K562 (cell line): ENCODE measurements at regions of chr2 and their contacts with region 1.

Region 1: GRCh38 chr2:126657636-126658318 is 1.8 kb downstream of the GYPC start:
- DNase-seq: peak; percentile 62 to 92 (median 76)
- ATAC-seq: peak; percentile 73
- H3K4me3 ChIP-seq: peak overlapping the region; percentile 82
- H3K27ac ChIP-seq: peak overlapping the region; percentile 92
- H3K4me1 ChIP-seq: peaks cover 61 to 64% of the 10 kb centered on the region in 2 experiments
- H3K27me3 ChIP-seq: no peaks in the 10 kb centered on the region
- CTCF ChIP-seq: no peak
- EP300 ChIP-seq: peak; percentile 66; the same call in 1 of the 2 replicates
- POLR2A ChIP-seq: peak; percentile 40; the same call in 1 of the 2 replicates
- RAD21 ChIP-seq: no peak; a peak in 1 of 4 replicates

Region 2: GRCh38 chr2:126307740-126308139 is 350.0 kb before region 1 on chr2:
- CTCF ChIA-PET with region 1: no interaction called
- POLR2A ChIA-PET with region 1: no interaction called
- in situ Hi-C with region 1: no loop called
- intact Hi-C with region 1: loop called (anchors 2 kb)
- DNase-seq: no peak
- ATAC-seq: peak; percentile 55
- H3K4me3 ChIP-seq: peak overlapping the region; percentile 61
- H3K27ac ChIP-seq: peak overlapping the region; percentile 94
- H3K4me1 ChIP-seq: peaks cover 4 to 17% of the 10 kb centered on the region in 2 experiments; a peak in 2 of 5 replicates
- H3K27me3 ChIP-seq: no peaks in the 10 kb centered on the region
- CTCF ChIP-seq: no peak
- EP300 ChIP-seq: no peak
- POLR2A ChIP-seq: no peak
- RAD21 ChIP-seq: no peak

Region 3: DNA sequence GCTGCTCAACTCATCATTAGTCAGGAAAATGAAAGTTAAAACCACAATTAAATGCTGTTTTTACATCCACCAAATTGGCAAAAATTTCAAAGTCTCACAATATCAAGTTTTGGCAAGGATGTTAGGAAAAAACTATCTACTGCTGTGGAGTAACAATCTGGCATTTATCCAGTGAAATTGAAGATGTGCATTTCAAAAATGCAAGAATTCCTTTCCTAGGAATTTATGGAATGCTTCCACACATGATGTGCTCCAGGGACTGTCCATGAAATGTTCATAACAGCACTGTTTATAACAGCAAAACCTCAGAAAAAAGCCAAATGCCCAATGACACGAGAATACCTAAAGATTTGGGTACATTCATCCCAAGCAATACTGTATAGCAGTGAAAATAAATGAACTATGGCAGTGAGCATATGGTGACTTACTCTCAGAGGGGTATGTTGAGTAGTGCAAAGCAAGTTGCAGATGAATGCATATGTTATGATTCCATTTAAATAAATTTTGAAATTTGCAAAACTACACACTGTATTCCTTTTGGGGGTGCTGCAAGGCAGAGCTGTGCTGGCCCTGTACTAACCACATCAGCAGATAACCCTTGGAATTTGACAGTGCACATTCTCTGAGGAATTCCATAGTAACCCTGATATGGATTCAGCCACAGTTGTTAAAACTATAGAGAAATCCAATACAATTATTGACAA is 43.1 kb before region 1 on chr2:
- CTCF ChIA-PET with region 1: no interaction called
- POLR2A ChIA-PET with region 1: no interaction called
- in situ Hi-C with region 1: no loop called
- intact Hi-C with region 1: loop called (anchors 1 kb)
- DNase-seq: no peak
- ATAC-seq: peak; percentile 77
- H3K4me3 ChIP-seq: no peak overlapping the region
- H3K27ac ChIP-seq: no peak overlapping the region
- H3K4me1 ChIP-seq: no peaks in the 10 kb centered on the region
- H3K27me3 ChIP-seq: no peaks in the 10 kb centered on the region
- CTCF ChIP-seq: peak; percentile 23 to 59 (median 31); a peak in 4 of 6 replicates
- EP300 ChIP-seq: no peak
- POLR2A ChIP-seq: no peak
- RAD21 ChIP-seq: peak; percentile 52 to 61

Region 4: DNA sequence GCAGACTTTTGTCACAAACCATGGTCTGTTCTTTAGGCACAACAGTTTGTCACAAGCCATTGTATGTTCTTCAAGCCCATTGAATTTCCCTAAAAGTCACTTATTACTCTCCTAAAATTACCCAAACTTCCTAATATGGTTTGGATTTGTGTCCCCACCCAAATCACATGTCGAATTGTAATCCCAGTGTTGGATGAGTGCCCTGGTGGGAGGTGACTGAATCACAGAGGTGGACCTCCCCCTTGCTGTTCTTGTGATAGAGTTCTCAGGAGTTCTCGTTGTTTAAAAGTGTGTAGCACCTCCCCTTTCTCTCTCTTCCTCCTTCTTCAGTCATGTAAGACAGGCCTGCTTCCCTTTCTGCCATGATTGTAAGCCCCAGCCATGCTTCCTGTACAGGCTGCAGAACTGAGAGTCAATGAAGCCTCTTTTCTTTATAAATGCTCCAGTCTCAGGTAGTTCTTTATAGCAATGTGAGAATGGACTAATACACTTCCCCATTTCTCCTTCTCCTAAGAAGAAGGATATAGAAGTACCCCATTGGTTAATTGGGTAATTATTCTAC is 13.1 kb before region 1 on chr2:
- CTCF ChIA-PET with region 1: no interaction called
- POLR2A ChIA-PET with region 1: interaction called, 9 read pairs
- in situ Hi-C with region 1: no loop called
- intact Hi-C with region 1: loop called (anchors 1 kb)
- DNase-seq: peak; percentile 44 to 89 (median 50)
- ATAC-seq: peak; percentile 79
- H3K4me3 ChIP-seq: peak overlapping the region; percentile 18; the same call in 1 of the 2 replicates
- H3K27ac ChIP-seq: peak overlapping the region; percentile 66
- H3K4me1 ChIP-seq: peaks cover 27 to 76% of the 10 kb centered on the region in 2 experiments
- H3K27me3 ChIP-seq: no peaks in the 10 kb centered on the region
- CTCF ChIP-seq: no peak
- EP300 ChIP-seq: peak; percentile 39; the same call in 1 of the 2 replicates
- POLR2A ChIP-seq: 0 out of 2 replicates have a peak, but pooled peaks have one; percentile 37
- RAD21 ChIP-seq: no peak

Region 5: DNA sequence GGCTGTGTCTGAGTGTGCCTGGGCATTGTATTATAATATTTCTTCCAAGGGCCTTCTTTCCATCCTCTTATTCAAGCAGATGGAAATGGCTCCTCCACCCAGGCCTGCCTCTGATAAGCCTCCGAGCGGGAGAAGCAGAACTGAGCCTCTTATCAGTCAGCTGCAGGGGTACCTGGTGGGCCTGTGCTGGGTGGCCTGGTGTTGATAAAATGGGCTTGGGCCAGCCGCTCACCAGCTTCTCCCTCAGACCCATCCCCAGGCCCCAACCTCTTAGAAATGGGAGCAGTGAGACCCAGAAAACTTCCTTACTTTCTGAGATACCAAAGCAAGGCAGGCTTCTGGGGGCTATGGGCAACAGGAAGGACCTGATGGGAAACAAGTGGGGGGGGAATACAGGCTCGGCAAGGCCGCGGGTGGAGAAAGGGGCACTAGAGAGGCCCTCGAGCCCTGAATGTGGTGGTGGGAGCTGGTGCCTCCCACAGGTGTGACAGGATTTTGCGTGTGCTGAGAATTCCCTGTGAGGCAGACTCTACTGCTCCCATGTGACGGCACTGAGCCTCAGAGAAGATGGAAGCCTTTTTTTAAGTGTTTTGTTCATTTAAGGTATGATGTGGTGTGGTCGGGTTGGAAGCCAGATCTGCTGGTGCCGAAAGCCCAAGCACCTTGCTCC is 16.4 kb after region 1 on chr2:
- CTCF ChIA-PET with region 1: no interaction called
- POLR2A ChIA-PET with region 1: interaction called, 10 read pairs
- in situ Hi-C with region 1: no loop called
- intact Hi-C with region 1: loop called (anchors 2 kb)
- DNase-seq: peak; percentile 87 to 97 (median 92)
- ATAC-seq: peak; percentile 85
- H3K4me3 ChIP-seq: peak overlapping the region; percentile 5; the same call in 1 of the 2 replicates
- H3K27ac ChIP-seq: peak overlapping the region; percentile 78
- H3K4me1 ChIP-seq: peaks cover 48 to 69% of the 10 kb centered on the region in 2 experiments
- H3K27me3 ChIP-seq: no peaks in the 10 kb centered on the region
- CTCF ChIP-seq: peak; percentile 25 to 61 (median 41); a peak in 4 of 6 replicates
- EP300 ChIP-seq: peak; percentile 96
- POLR2A ChIP-seq: no peak
- RAD21 ChIP-seq: no peak; a peak in 1 of 4 replicates

Region 6: GRCh38 chr2:127039387-127040031 is 381.7 kb after region 1 on chr2:
- CTCF ChIA-PET with region 1: no interaction called
- POLR2A ChIA-PET with region 1: no interaction called
- in situ Hi-C with region 1: no loop called
- intact Hi-C with region 1: no loop called
- DNase-seq: no peak
- ATAC-seq: no peak
- H3K4me3 ChIP-seq: no peak overlapping the region
- H3K27ac ChIP-seq: no peak overlapping the region
- H3K4me1 ChIP-seq: no peaks in the 10 kb centered on the region
- H3K27me3 ChIP-seq: peaks cover 9 to 66% of the 10 kb centered on the region in 2 experiments
- CTCF ChIP-seq: no peak
- EP300 ChIP-seq: no peak
- POLR2A ChIP-seq: no peak
- RAD21 ChIP-seq: no peak